Transverse colon (tissue), 4 donors: ENCODE measurements at regions of chr3 and their contacts with region 1.

Region 1: GRCh38 chr3:156664831-156665178 is 9.6 kb upstream of the TIPARP start:
- DNase-seq: no peak
- H3K4me3 ChIP-seq: no peak overlapping the region
- H3K27ac ChIP-seq: peak overlapping the region in 3 of 4 donors; percentile 4 to 10 (median 10)
- H3K4me1 ChIP-seq: peaks cover 0 to 45% (median 16%) of the 10 kb centered on the region in 4 donors
- H3K27me3 ChIP-seq: no peaks in the 10 kb centered on the region
- CTCF ChIP-seq: no peak
- EP300 ChIP-seq: no peak
- POLR2A ChIP-seq: no peak

Region 2: DNA sequence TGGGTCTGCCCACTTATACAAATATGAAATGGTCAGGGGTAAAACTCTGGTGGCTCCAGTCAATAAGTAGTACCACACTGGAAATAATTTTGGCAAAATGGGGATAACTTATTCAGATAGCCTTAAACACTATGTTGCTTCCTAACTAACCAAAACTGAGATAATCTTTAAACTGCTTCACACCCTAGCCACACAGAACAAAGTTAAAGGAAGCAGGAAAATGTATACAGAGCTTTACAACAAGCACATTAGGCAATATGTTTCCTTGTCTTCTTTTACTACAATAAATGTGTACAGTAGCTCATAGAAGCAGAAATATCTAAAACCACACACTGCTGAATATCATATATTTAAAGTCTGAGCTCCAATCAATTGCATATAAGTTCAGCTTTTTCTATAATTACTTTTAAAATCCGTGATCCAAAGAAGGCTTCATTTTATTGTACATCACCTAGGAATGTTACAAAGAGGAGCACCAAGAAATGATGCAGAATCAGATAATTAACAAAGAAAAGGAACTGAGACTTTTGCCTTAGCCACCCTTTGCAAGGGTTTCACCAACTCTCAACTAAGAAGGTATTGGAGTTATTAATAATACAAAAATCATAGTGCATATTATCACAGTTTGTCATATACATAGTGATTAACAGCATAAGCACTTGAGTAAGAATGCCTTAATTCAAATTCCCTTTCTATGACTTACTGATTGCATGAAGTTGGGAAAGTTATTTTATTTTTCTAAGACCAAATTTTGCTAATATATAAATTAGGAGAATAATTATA is 100.7 kb before region 1 on chr3:
- in situ Hi-C with region 1: loop called (anchors 10 to 25 kb)
- intact Hi-C with region 1: no loop called
- DNase-seq: no peak
- H3K4me3 ChIP-seq: no peak overlapping the region
- H3K27ac ChIP-seq: peak overlapping the region; percentile 55 to 69 (median 62)
- H3K4me1 ChIP-seq: peaks cover 0 to 24% (median 11%) of the 10 kb centered on the region in 4 donors
- H3K27me3 ChIP-seq: no peaks in the 10 kb centered on the region
- CTCF ChIP-seq: no peak
- EP300 ChIP-seq: no peak
- POLR2A ChIP-seq: no peak

Region 3: DNA sequence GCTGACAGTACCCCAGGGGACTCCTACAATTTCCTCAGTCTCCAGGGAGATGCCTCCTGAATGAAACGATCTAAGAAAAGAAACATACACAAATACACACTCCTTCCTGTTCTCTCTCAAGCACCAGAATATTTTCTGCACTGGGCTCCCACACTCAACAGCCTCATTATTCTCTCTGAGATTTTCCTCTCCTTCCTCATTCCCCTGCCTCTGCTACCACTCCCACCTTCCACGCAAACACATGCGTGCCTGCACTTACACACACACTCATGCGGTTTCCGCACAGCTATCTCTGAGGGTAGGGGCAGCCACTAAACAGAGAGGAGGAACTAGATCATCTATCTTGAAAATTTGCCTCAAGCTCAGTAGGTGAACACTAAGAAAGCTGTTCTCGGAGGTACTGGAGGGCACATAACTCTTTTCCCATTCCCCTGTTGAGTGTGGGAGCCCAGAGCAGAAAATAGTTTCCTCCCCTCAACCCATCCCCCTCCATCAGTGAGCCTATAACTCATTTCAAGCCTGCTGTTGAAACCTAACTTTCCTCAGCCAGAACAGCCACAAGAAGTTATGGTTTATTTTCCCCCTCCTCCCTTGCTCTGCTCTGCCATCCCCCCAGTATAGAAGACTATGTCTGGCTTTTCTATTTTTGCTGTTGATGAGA is 20.9 kb before region 1 on chr3:
- in situ Hi-C with region 1: no loop called
- intact Hi-C with region 1: no loop called
- DNase-seq: peak; percentile 23
- H3K4me3 ChIP-seq: no peak overlapping the region
- H3K27ac ChIP-seq: no peak overlapping the region
- H3K4me1 ChIP-seq: peaks cover 0 to 28% (median 0%) of the 10 kb centered on the region in 4 donors
- H3K27me3 ChIP-seq: no peaks in the 10 kb centered on the region
- CTCF ChIP-seq: no peak
- EP300 ChIP-seq: no peak
- POLR2A ChIP-seq: no peak